Heart left ventricle (tissue), 16 donors: ENCODE measurements at regions of chr9 and their contacts with region 1.

Region 1: GRCh38 chr9:114271641-114272081 is 51.2 kb upstream of the ORM1 start:
- DNase-seq: peak; percentile 45 to 68 (median 60)
- ATAC-seq: peak; percentile 55 to 84 (median 70)
- H3K4me3 ChIP-seq: no peak overlapping the region
- H3K27ac ChIP-seq: no peak overlapping the region
- H3K4me1 ChIP-seq: no peaks in the 10 kb centered on the region
- H3K27me3 ChIP-seq: no peaks in the 10 kb centered on the region
- CTCF ChIP-seq: peak; percentile 8 to 60 (median 47)
- POLR2A ChIP-seq: no peak

Region 2: DNA sequence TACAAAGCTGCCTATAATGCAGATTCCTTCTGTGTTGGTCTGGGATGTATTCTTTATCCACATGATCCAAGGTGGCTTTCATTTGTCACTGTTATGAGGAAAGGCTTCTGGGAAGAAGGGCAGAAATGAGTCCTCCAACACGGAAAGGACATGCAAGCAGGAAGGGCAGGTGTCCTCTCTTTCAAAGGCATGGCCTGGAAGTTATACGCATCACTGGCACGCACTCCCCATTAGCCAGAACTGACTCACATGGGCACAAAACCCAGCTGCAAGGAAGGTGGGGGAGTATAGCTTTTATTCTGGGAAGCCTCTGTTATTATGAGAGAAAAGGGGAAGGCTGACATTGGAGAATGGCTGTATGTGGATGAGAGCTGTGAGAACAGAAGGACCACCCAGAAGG is 536.8 kb before region 1 on chr9:
- intact Hi-C with region 1: no loop called
- DNase-seq: no peak
- ATAC-seq: no peak
- H3K4me3 ChIP-seq: no peak overlapping the region
- H3K27ac ChIP-seq: no peak overlapping the region
- H3K4me1 ChIP-seq: no peaks in the 10 kb centered on the region
- H3K27me3 ChIP-seq: peaks cover 0 to 2% (median 0%) of the 10 kb centered on the region in 9 donors
- CTCF ChIP-seq: no peak
- POLR2A ChIP-seq: no peak

Region 3: DNA sequence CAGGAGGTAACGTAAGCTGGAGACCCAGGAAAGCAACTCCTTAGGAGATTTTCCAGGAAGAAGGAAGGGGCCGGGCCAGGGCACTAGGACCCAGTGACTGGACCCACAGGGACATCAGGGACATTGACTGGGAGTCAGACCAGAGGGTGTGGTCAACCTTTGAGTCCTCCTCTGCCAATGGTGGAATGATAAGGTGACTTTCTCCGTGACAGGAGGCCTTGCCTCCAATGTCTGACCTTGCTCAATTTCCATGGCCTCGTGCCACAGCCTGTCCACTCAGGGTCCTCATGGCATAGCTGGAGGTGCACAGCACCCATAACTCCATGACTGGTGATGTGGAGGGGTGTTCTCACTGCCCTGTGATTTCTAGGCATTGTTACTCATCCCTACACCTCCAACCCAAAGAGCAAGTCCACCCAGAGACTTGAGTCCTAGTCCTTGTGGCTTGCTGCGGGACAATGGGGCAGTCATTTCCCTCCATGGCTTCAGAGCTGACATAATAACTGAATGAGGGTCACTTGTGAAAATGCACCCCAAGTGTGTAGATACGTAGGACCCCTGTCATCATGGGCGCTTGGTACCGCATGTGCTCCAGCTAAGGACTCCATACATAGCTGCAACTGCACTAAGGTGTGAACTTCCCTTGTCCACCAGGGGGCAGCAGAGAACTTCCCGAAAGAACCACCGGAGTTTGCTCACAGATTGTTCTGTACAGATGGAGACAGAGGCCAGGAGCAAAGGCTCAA is 189.5 kb before region 1 on chr9:
- intact Hi-C with region 1: loop called in 1 of 10 experiments (anchors 5 kb)
- DNase-seq: peak; percentile 75 to 87 (median 84)
- ATAC-seq: peak; percentile 75 to 95 (median 90)
- H3K4me3 ChIP-seq: no peak overlapping the region
- H3K27ac ChIP-seq: no peak overlapping the region
- H3K4me1 ChIP-seq: peaks cover 0 to 5% (median 0%) of the 10 kb centered on the region in 12 donors
- H3K27me3 ChIP-seq: peaks cover 0 to 11% (median 0%) of the 10 kb centered on the region in 9 donors
- CTCF ChIP-seq: peak; percentile 83 to 95 (median 90)
- POLR2A ChIP-seq: no peak

Region 4: DNA sequence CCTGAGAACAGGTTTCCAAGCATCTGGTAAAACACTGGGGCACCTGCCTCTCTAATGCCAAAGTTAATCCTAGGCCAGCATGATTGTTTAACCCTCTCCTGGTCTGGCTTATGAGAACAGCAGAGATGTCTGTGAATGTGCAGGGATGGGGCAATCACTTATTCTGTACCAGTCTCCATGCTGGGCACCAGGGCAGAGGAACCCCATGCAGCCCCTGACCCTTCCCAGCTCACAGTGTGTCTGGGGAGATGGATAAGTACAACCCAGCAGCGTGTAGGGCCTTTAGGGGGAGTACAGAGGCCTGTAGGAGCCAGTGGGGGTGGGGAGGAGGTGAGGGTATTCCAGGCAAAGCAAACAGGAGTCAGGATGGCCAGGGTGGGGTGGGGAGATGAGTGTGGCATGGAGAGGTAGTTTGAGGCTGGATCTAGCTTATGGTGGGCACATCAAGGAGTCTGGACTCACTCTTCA is 171.8 kb before region 1 on chr9:
- intact Hi-C with region 1: loop called in 4 of 10 experiments (anchors 5 kb)
- DNase-seq: no peak
- ATAC-seq: no peak
- H3K4me3 ChIP-seq: no peak overlapping the region
- H3K27ac ChIP-seq: no peak overlapping the region
- H3K4me1 ChIP-seq: peaks cover 0 to 17% (median 5%) of the 10 kb centered on the region in 12 donors
- H3K27me3 ChIP-seq: peaks cover 0 to 40% (median 13%) of the 10 kb centered on the region in 9 donors
- CTCF ChIP-seq: no peak
- POLR2A ChIP-seq: no peak

Region 5: GRCh38 chr9:114397848-114398605 is 126.4 kb after region 1 on chr9:
- intact Hi-C with region 1: no loop called
- DNase-seq: peak; percentile 96 to 98 (median 97)
- ATAC-seq: peak; percentile 88 to 97 (median 96)
- H3K4me3 ChIP-seq: peak overlapping the region; percentile 22 to 97 (median 82)
- H3K27ac ChIP-seq: peak overlapping the region; percentile 25 to 95 (median 76)
- H3K4me1 ChIP-seq: peaks cover 0 to 40% (median 13%) of the 10 kb centered on the region in 12 donors
- H3K27me3 ChIP-seq: no peaks in the 10 kb centered on the region
- CTCF ChIP-seq: peak in 3 of 12 donors; percentile 9 to 21 (median 9)
- POLR2A ChIP-seq: peak in 1 of 2 donors; percentile 60